ENCODE measurements at regions of chr4 and their contacts with region 1.

Region 1: DNA sequence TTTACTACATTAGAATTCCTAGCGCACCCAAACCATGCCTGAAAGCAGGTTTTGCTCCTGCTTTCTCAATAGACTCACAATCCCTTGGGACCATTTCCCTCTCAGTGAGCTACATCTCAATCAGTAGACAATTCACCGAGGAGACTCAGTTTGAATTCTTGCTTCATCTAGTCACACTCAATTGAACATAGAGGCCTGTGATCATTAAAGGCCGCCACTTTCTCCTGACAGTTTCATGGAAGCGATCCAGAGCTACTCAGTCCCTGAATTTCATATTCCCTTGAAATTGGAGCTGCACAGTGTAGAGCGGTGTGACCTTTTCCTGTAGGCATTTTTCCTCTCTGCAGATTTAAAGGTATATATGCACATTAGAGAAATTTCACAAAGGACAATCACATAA is 193.9 kb upstream of the SPOCK3 start:
- DNase-seq: no peak
- ATAC-seq: no peak
- H3K4me3 ChIP-seq: no peak overlapping the region
- H3K27ac ChIP-seq: no peak overlapping the region
- H3K4me1 ChIP-seq: no peaks in the 10 kb centered on the region
- H3K27me3 ChIP-seq: no peaks in the 10 kb centered on the region
- CTCF ChIP-seq: no peak
- EP300 ChIP-seq: no peak
- POLR2A ChIP-seq: no peak
- RAD21 ChIP-seq: no peak

Region 2: GRCh38 chr4:167248271-167248670 is 179.9 kb before region 1 on chr4:
- CTCF ChIA-PET with region 1: no interaction called
- POLR2A ChIA-PET with region 1: no interaction called
- in situ Hi-C with region 1: no loop called
- intact Hi-C with region 1: no loop called
- DNase-seq: no peak
- ATAC-seq: no peak
- H3K4me3 ChIP-seq: no peak overlapping the region
- H3K27ac ChIP-seq: no peak overlapping the region
- H3K4me1 ChIP-seq: no peaks in the 10 kb centered on the region
- H3K27me3 ChIP-seq: no peaks in the 10 kb centered on the region
- CTCF ChIP-seq: no peak
- EP300 ChIP-seq: no peak
- POLR2A ChIP-seq: no peak
- RAD21 ChIP-seq: no peak

Region 3: DNA sequence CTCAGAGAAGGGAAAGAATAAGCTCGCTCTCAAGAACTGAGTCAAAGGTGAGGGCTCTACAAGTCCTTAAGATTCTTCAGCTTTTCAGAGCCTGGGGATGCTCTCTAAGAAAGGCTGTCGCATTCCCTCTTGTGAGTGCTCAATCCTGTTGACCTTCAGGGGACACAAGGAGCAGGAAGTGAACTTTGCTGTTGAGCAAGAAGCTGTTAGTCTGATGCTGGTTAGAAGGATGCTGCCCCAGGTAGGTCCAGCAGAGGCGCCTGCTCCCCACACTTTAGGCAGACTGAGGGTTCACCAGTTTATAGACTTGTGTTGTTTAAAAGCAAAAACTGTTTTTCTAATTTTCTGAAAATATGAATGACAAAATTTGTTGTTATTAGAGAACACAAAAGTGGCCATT is 68.4 kb before region 1 on chr4:
- CTCF ChIA-PET with region 1: no interaction called
- POLR2A ChIA-PET with region 1: no interaction called
- in situ Hi-C with region 1: no loop called
- intact Hi-C with region 1: loop called (anchors 2 kb)
- DNase-seq: no peak
- ATAC-seq: no peak
- H3K4me3 ChIP-seq: no peak overlapping the region
- H3K27ac ChIP-seq: no peak overlapping the region
- H3K4me1 ChIP-seq: no peaks in the 10 kb centered on the region
- H3K27me3 ChIP-seq: no peaks in the 10 kb centered on the region
- CTCF ChIP-seq: no peak
- EP300 ChIP-seq: no peak
- POLR2A ChIP-seq: no peak
- RAD21 ChIP-seq: no peak

Measured in HepG2 (cell line).